ENCODE measurements at regions of chr6 and their contacts with region 1.

Region 1: GRCh38 chr6:29752451-29753308 is 29.4 kb downstream of the HLA-F start:
- DNase-seq: peak; percentile 90 to 93 (median 93)
- ATAC-seq: peak; percentile 72 to 87 (median 86)
- H3K4me3 ChIP-seq: peak overlapping the region; percentile 44 to 84 (median 72)
- H3K27ac ChIP-seq: peak overlapping the region; percentile 74 to 97 (median 95)
- H3K4me1 ChIP-seq: peaks cover 0 to 34% (median 28%) of the 10 kb centered on the region in 12 donors
- H3K27me3 ChIP-seq: no peaks in the 10 kb centered on the region
- CTCF ChIP-seq: peak; percentile 87 to 100 (median 92)
- POLR2A ChIP-seq: peak in 1 of 2 donors; percentile 55

Region 2: DNA sequence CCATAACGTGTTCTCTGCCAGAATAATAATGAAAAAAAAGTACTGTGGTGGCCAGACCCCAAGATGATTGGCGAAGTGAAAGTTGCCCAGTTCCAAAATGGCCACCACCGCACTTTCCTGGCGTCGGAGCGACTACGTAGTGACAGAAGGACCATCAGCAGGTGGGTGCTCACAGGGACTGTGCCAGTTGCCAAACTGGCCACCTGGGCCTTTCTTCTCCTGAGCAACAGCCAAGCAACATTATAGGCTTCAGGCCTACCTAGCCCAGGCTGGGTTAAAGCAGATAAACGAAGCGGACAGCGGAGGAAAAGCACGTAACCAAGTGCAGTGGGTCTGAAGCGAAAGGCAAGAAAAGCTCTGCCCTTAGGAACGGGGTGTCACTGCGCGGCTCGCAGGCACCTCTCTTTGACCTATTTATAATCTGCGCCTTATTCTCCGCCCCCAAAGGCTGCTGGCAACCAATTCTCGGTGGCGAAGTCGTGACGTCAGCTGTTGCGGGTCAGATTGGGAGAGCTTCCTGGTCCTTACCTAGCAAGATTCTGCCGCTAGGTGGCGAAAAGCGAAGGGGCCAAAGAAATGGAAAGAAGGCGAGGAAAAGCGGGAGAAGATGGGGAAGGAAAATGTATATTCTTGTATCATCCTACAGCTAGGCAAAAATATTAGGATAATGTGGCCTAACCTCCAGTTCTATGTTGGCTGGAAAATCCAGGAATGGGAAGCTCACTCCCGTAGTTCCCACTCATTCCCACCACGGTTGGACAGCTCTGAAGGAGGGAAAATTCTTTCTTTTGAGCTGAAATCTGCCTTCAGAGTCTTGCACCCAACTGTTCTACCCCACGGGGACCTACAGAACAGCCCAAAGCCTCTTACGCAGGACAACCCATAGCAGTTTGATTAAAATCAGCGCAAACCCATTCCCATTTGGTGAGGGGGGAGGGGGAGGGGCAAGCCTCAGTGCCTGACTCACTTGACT is 102.7 kb before region 1 on chr6:
- intact Hi-C with region 1: loop called in 2 of 10 experiments (anchors 5 to 10 kb)
- DNase-seq: peak; percentile 98 to 99 (median 98)
- ATAC-seq: peak; percentile 95 to 98 (median 97)
- H3K4me3 ChIP-seq: peak overlapping the region in 11 of 12 donors; percentile 44 to 82 (median 68)
- H3K27ac ChIP-seq: peak overlapping the region; percentile 92 to 98 (median 96)
- H3K4me1 ChIP-seq: peaks cover 0 to 15% (median 5%) of the 10 kb centered on the region in 12 donors
- H3K27me3 ChIP-seq: peaks cover 0 to 2% (median 0%) of the 10 kb centered on the region in 9 donors
- CTCF ChIP-seq: peak; percentile 84 to 97 (median 94)
- POLR2A ChIP-seq: peak; percentile 35 to 89

Region 3: GRCh38 chr6:29656157-29656556 is 96.5 kb before region 1 on chr6:
- intact Hi-C with region 1: loop called in 2 of 10 experiments (anchors 5 to 10 kb)
- DNase-seq: peak in 4 of 5 donors; percentile 51 to 79 (median 64)
- ATAC-seq: peak; percentile 89 to 95 (median 93)
- H3K4me3 ChIP-seq: no peak overlapping the region
- H3K27ac ChIP-seq: peak overlapping the region; percentile 66 to 95 (median 81)
- H3K4me1 ChIP-seq: peaks cover 0 to 31% (median 3%) of the 10 kb centered on the region in 12 donors
- H3K27me3 ChIP-seq: peaks cover 0 to 3% (median 0%) of the 10 kb centered on the region in 9 donors
- CTCF ChIP-seq: no peak
- POLR2A ChIP-seq: no peak

Region 4: GRCh38 chr6:29705389-29706231 is 47.1 kb before region 1 on chr6:
- intact Hi-C with region 1: loop called in 9 of 10 experiments (anchors 1 to 10 kb)
- DNase-seq: peak in 1 of 5 donors; percentile 34
- ATAC-seq: peak in 3 of 4 donors; percentile 64 to 70 (median 67)
- H3K4me3 ChIP-seq: no peak overlapping the region
- H3K27ac ChIP-seq: no peak overlapping the region
- H3K4me1 ChIP-seq: peaks cover 0 to 20% (median 0%) of the 10 kb centered on the region in 12 donors
- H3K27me3 ChIP-seq: peaks cover 0 to 25% (median 2%) of the 10 kb centered on the region in 9 donors
- CTCF ChIP-seq: peak in 11 of 12 donors; percentile 38 to 74 (median 65)
- POLR2A ChIP-seq: no peak

Region 5: GRCh38 chr6:29723262-29723665 is 29.4 kb before region 1 on chr6 and contains the start of gene HLA-F:
- intact Hi-C with region 1: loop called in 1 of 10 experiments (anchors 2 kb)
- DNase-seq: peak; percentile 86 to 92 (median 89)
- ATAC-seq: peak; percentile 95 to 99 (median 98)
- H3K4me3 ChIP-seq: peak within 1 kb of the TSS; percentile 63 to 98 (median 88)
- H3K27ac ChIP-seq: peak within 1 kb of the TSS; percentile 80 to 97 (median 92)
- H3K4me1 ChIP-seq: peaks cover 0 to 35% (median 16%) of the 10 kb centered on the region in 12 donors
- H3K27me3 ChIP-seq: no peaks in the 10 kb centered on the region
- CTCF ChIP-seq: peak in 1 of 12 donors; percentile 8
- POLR2A ChIP-seq: peak; percentile 69 to 82
- total RNA-seq, gene HLA-F: 23.1 to 228 (median 34.7) TPM

Region 6: DNA sequence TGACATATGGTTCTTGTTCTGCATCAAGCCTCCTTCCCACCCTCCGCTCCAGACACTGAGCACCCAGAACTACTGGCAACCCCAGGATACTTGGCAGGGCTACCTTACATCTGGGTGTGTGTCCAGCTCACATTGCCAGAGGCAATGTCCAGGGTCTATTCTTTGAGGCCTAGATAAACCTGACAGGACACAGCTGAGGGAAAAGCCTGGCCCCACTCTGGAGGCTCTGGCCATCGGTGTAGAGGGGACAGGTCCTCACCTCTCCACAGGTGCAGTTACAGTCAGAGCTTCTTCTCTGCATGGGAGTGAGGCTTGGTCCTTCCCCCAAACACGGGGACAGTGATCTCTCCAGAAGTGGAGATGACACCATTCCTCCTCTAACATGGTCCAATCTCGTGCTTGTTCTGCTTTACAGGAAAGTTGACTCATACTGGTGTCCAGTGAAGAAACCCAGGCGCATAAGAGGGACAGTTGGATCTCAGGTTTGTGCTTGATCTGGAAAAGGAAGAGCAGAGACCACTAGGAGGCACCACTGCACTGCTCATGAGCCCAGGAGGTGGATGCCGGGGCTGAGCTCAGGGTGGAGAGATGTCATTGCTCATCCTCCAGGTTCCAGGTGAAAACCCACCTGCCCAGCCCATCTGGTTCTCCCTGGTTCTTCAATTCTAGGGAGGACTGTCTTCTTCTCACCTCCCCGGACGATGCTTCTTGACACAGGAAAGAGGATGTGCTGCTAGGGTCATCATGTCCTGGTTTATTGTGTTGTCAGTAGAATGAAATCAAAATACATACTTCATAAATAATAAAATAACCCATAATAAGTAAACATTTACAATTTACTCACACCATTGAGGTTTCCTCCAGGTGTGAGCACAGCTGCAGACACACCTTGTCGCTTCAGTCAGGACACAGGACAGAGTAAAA is 14.7 kb before region 1 on chr6:
- intact Hi-C with region 1: loop called in 2 of 10 experiments (anchors 1 kb)
- DNase-seq: peak in 4 of 5 donors; percentile 63 to 73 (median 68)
- ATAC-seq: peak; percentile 68 to 89 (median 88)
- H3K4me3 ChIP-seq: no peak overlapping the region
- H3K27ac ChIP-seq: peak overlapping the region in 1 of 12 donors; percentile 5
- H3K4me1 ChIP-seq: peaks cover 0 to 19% (median 5%) of the 10 kb centered on the region in 12 donors
- H3K27me3 ChIP-seq: no peaks in the 10 kb centered on the region
- CTCF ChIP-seq: peak; percentile 43 to 83 (median 70)
- POLR2A ChIP-seq: no peak

Region 7: GRCh38 chr6:29813809-29814208 is 61.1 kb after region 1 on chr6:
- intact Hi-C with region 1: no loop called
- DNase-seq: no peak
- ATAC-seq: no peak
- H3K4me3 ChIP-seq: no peak overlapping the region
- H3K27ac ChIP-seq: no peak overlapping the region
- H3K4me1 ChIP-seq: no peaks in the 10 kb centered on the region
- H3K27me3 ChIP-seq: peaks cover 0 to 16% (median 0%) of the 10 kb centered on the region in 9 donors
- CTCF ChIP-seq: no peak
- POLR2A ChIP-seq: no peak